ENCODE measurements at regions of chr17 and their contacts with region 1.

Region 1: DNA sequence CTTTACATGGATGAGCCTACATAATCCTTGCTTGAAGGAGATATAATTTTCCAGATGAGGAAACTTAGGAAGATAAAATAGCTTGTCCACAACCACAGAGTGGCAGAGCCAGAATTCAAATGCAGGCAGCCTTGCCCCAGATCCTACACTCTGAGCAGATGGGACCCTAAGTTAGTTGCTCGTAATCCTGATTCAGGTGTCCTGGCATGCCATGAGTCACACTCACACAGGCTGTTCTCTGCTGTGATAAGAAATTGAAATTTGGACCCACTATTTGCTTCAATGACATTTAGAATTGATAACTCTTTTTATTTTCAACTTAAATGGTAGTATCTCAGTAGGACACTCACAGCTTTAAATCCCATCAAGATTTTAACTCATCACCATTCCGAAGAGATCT is 150.7 kb upstream of the CACNG5 start:
- DNase-seq: no peak
- ATAC-seq: no peak
- H3K4me3 ChIP-seq: no peak overlapping the region
- H3K27ac ChIP-seq: no peak overlapping the region
- H3K4me1 ChIP-seq: no peaks in the 10 kb centered on the region
- H3K27me3 ChIP-seq: no peaks in the 10 kb centered on the region
- CTCF ChIP-seq: no peak
- EP300 ChIP-seq: no peak
- POLR2A ChIP-seq: no peak
- RAD21 ChIP-seq: no peak

Region 2: GRCh38 chr17:66673668-66674315 is 10.5 kb before region 1 on chr17:
- CTCF ChIA-PET with region 1: interaction called, 4 read pairs
- POLR2A ChIA-PET with region 1: no interaction called
- RAD21 ChIA-PET with region 1: interaction called, 5 read pairs
- SMC1A ChIA-PET with region 1: interaction called, 14 read pairs
- in situ Hi-C with region 1: no loop called
- intact Hi-C with region 1: no loop called
- DNase-seq: no peak
- ATAC-seq: peak; percentile 72
- H3K4me3 ChIP-seq: no peak overlapping the region
- H3K27ac ChIP-seq: no peak overlapping the region
- H3K4me1 ChIP-seq: no peaks in the 10 kb centered on the region
- H3K27me3 ChIP-seq: no peaks in the 10 kb centered on the region
- CTCF ChIP-seq: peak; percentile 49 to 63 (median 55); a peak in 5 of 6 replicates
- EP300 ChIP-seq: no peak
- POLR2A ChIP-seq: no peak
- RAD21 ChIP-seq: peak; percentile 74

Region 3: GRCh38 chr17:66799849-66800537 is 115.7 kb after region 1 on chr17:
- CTCF ChIA-PET with region 1: no interaction called
- POLR2A ChIA-PET with region 1: no interaction called
- RAD21 ChIA-PET with region 1: no interaction called
- SMC1A ChIA-PET with region 1: no interaction called
- in situ Hi-C with region 1: no loop called
- intact Hi-C with region 1: no loop called
- DNase-seq: no peak
- ATAC-seq: no peak
- H3K4me3 ChIP-seq: no peak overlapping the region
- H3K27ac ChIP-seq: no peak overlapping the region
- H3K4me1 ChIP-seq: no peaks in the 10 kb centered on the region
- H3K27me3 ChIP-seq: no peaks in the 10 kb centered on the region
- CTCF ChIP-seq: no peak
- EP300 ChIP-seq: no peak
- POLR2A ChIP-seq: no peak
- RAD21 ChIP-seq: no peak

Region 4: DNA sequence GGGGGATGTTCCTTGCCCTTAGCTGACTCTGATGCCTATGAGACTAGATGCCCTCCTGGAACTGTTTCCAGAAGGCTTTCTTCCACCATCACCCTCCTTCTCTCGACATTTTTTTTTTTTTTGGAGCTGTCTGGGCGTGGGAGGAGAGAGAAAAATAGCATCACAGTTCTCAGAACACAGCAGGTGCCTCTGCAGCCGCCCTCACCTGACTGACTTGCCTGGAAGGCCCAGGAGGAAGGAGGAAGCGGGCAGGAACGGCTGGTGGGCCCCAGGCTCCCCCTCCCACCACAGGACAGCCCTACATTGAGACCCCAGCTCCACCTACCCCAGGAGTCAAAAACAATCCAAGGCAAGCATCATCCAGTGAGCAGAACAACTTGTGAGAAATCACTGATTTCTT is 130.3 kb after region 1 on chr17:
- CTCF ChIA-PET with region 1: no interaction called
- POLR2A ChIA-PET with region 1: no interaction called
- RAD21 ChIA-PET with region 1: no interaction called
- SMC1A ChIA-PET with region 1: no interaction called
- in situ Hi-C with region 1: no loop called
- intact Hi-C with region 1: no loop called
- DNase-seq: no peak
- ATAC-seq: no peak
- H3K4me3 ChIP-seq: no peak overlapping the region
- H3K27ac ChIP-seq: no peak overlapping the region
- H3K4me1 ChIP-seq: no peaks in the 10 kb centered on the region
- H3K27me3 ChIP-seq: 0 out of 4 replicates have a peak, but pooled peaks cover 0 to 2% of the 10 kb centered on the region in 2 experiments
- CTCF ChIP-seq: no peak
- EP300 ChIP-seq: no peak
- POLR2A ChIP-seq: no peak
- RAD21 ChIP-seq: no peak

Measured in GM12878 (cell line).